Activated naive CD4-positive, alpha-beta T cell treated with anti-CD3 and anti-CD28 coated beads for 36 hours (primary cell): ENCODE measurements at regions of chr5 and their contacts with region 1.

Region 1: DNA sequence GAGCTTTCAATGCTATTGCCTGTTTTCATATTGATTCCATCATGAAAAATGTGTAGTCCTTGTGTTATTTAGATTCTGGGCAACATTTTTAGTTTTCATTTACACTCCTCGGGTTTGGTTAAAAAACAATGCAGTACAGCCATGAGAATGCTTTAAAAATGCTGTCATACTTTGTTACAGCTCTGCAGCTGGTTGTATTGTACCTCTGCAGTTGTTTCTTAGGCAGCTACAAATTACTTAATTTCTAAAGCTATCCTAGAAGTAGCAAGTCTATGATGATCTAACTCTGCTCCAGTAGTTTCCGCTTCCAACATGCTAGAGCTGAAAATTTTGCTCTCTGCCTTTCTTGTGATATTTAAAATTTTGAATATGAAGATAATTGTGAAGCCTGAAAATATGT is 20.2 kb downstream of the SNX18 start:
- DNase-seq: no peak
- H3K4me3 Mint-ChIP-seq: no peak overlapping the region
- H3K27ac Mint-ChIP-seq: no peak overlapping the region
- H3K4me1 Mint-ChIP-seq: peaks cover 27% of the 10 kb centered on the region
- H3K27me3 Mint-ChIP-seq: no peaks in the 10 kb centered on the region

Region 2: DNA sequence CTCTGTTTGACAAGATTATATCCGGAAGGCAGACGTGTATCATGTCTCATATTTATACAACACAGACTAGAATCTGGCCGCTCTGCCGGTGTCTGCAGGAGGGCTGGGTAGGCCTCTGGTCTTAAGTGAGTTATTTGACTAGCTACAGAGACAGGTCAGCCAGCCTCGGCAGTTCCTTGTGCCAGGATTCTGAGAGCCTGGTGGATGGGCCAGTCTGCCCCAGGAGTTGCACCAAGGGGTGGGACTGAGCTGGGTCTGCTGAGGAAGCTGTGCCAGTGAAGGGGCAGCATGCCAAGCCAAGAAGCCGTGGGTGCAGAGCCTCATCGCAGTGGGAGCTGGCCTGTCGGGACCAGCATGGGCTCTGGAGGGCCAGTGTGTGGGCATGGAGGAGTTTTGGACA is 13.0 kb before region 1 on chr5:
- CTCF ChIA-PET with region 1: interaction called, 4 read pairs
- intact Hi-C with region 1: loop called (anchors 2 kb)
- DNase-seq: no peak
- H3K4me3 Mint-ChIP-seq: no peak overlapping the region
- H3K27ac Mint-ChIP-seq: no peak overlapping the region
- H3K4me1 Mint-ChIP-seq: peaks cover 54% of the 10 kb centered on the region
- H3K27me3 Mint-ChIP-seq: no peaks in the 10 kb centered on the region

Region 3: GRCh38 chr5:54956922-54957321 is 419.2 kb after region 1 on chr5:
- CTCF ChIA-PET with region 1: no interaction called
- intact Hi-C with region 1: no loop called
- DNase-seq: no peak
- H3K4me3 Mint-ChIP-seq: no peak overlapping the region
- H3K27ac Mint-ChIP-seq: no peak overlapping the region
- H3K4me1 Mint-ChIP-seq: no peaks in the 10 kb centered on the region
- H3K27me3 Mint-ChIP-seq: peaks cover 2% of the 10 kb centered on the region